H1 (cell line): ENCODE measurements at regions of chr13 and their contacts with region 1.

Region 1: DNA sequence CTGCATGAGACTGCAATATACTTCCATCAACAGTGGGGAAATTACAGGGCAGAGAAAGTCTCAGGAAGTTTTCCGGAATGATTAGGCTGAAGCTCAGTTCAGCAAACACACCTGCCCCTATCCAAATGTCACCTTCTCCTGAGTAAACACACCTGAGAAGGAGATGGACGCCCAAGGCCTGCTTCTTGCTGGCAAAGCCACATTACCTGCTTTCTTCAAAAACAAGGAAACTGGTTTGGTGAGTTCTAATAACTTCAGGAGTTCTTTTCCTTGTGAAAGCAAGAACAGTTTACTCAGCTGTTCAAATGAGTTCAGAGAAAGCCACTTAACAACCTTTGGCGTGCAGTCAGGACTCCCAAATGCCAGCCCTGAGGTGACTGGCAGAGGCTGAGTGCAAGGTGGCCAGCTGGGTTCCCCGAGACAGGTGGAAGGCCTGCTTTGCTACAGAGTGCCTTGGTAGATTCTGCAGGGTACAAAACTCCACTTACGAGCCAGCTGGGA is 160.5 kb downstream of the STK24 start:
- DNase-seq: no peak
- H3K4me3 ChIP-seq: no peak overlapping the region
- H3K27ac ChIP-seq: no peak overlapping the region
- H3K4me1 ChIP-seq: no peaks in the 10 kb centered on the region
- H3K27me3 ChIP-seq: no peaks in the 10 kb centered on the region
- CTCF ChIP-seq: no peak
- EP300 ChIP-seq: no peak
- POLR2A ChIP-seq: no peak
- RAD21 ChIP-seq: no peak

Region 2: DNA sequence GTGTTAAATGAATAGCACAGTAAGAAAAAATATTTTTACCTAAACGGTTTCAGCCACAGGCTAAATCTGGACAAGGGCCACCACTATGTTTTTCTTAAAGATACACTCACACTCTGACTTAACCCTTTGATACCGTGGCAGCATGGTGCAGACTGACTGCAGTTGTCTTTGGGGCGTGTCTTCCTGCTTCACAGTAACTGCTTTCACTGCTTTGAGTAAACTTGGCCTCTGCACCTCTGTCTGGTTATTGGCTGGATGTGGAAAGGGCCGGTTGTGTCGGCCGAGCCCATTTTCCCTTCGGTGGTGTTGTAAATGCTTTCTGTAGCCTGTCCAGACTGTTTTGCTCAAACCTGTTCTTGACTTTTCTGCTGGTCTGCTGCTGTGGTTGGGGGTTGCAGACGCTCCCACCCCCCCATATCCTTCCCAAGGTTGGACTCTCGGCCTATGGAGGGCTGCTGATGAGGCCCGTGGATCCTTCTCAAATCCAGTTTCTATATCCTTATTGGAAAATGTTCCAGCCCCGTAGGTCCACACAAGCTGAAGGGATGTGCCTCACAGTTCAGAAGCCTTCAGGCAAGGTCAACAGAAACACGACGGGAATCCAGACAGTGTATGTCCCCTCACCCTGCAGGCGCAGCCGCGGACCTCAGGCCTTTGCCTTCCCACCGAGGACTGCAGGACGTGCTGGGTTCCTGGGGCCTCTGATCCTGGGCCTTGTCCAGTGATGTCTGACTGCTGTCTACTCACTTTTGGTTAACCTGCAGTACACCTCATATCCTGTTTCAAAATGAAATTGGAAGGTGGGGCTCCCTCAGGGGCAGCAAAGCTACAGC is 149.1 kb before region 1 on chr13:
- CTCF ChIA-PET with region 1: no interaction called
- POLR2A ChIA-PET with region 1: no interaction called
- DNase-seq: no peak
- H3K4me3 ChIP-seq: no peak overlapping the region
- H3K27ac ChIP-seq: no peak overlapping the region
- H3K4me1 ChIP-seq: peaks cover 0 to under 1% (median 0%) of the 10 kb centered on the region in 4 experiments; a peak in 1 of 7 replicates
- H3K27me3 ChIP-seq: no peaks in the 10 kb centered on the region
- CTCF ChIP-seq: no peak
- EP300 ChIP-seq: no peak
- POLR2A ChIP-seq: no peak
- RAD21 ChIP-seq: no peak

Region 3: DNA sequence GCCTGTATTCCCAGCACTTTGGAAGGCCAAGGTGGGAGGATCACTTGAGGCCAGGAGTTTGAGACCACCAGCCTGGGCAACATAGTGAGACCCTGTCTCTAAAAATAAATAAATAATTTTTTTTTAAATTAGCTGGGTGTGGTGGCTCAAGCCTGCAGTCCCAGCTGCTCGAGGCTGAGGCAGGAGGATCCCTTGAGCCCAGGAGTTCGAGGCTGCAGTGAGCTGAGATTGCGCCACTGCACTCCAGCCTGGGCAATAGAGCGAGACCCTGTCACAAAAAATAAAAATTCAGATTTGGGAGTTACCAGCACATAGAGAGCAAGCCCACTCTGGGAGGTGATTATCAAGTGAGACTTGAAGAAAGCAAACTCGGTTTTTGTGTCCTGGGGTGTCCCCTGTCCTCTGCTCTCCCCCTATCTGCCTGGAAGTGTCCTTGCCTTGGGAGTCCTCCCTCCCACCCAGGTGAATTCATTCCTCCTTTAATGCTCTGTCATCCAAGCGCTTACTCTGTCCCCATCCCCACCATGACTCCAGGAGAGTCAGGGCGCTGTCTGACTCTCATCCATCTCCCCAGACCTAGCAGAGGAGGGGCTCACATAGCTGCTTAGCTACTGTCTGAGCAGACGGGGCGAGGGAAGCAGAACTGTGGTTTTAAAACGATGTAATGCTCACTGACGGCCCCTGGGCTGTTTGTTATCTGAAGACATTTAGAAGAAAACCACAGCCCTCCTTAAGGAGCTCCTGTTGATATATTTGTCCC is 13.8 kb after region 1 on chr13:
- CTCF ChIA-PET with region 1: interaction called, 16 read pairs
- POLR2A ChIA-PET with region 1: interaction called, 6 read pairs
- DNase-seq: no peak
- H3K4me3 ChIP-seq: no peak overlapping the region
- H3K27ac ChIP-seq: no peak overlapping the region
- H3K4me1 ChIP-seq: 0 out of 7 replicates have a peak, but pooled peaks cover 0 to 2% (median 0%) of the 10 kb centered on the region in 4 experiments
- H3K27me3 ChIP-seq: no peaks in the 10 kb centered on the region
- CTCF ChIP-seq: no peak
- EP300 ChIP-seq: no peak
- POLR2A ChIP-seq: no peak
- RAD21 ChIP-seq: no peak